CD14-positive monocyte (primary cell): ENCODE measurements at regions of chrX and their contacts with region 1.

Region 1: DNA sequence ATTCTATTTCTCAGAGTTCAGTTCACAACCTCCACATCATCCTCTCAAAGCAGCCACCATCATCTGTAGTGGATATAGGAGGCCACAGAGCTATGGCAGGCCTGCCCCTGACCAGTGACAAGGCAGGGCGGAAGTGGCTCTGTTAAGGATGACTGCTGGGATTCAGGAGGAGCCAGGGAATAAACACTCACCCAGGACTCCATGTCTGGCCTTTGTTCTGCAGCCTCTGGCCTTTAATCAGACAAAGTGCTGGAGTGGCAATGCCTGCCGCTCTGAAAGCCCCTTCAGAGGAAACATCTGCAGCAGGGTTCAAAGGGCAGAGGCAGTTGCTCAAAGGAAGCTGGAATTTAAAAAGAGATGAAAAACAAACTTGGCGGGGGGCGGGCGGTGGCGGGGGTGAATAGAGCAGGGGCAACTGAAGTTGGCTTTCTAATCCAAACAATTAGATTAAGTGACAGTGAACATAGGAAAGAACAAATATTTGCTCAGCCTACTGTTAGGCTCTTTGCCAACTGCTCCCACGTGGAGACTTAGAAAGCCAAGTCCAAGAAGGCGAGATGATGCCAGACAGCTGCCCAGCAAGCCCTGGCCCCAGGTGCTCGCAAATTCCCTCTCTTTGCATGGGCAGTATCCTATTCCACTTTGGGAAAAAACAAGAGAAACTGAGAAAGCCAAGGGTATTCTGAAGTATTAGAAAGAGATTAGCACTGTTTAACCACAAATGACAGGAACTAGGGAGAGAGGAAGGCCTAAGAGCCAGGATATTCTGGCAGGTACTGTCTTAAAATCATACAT is 5.5 kb downstream of the MPP1 start:
- DNase-seq: no peak
- H3K4me3 ChIP-seq: peak overlapping the region in 1 of 3 experiments; percentile 50
- H3K4me3 Mint-ChIP-seq: peak overlapping the region; percentile 55 to 56
- H3K27ac ChIP-seq: peak overlapping the region; percentile 94 to 100
- H3K27ac Mint-ChIP-seq: peak overlapping the region; percentile 96 to 98 (median 98)
- H3K4me1 ChIP-seq: peaks cover 87 to 94% of the 10 kb centered on the region in 2 donors
- H3K4me1 Mint-ChIP-seq: peaks cover 78% of the 10 kb centered on the region
- H3K27me3 ChIP-seq: no peaks in the 10 kb centered on the region
- H3K27me3 Mint-ChIP-seq: peaks cover 0 to 2% (median 0%) of the 10 kb centered on the region in 3 donors
- CTCF ChIP-seq: no peak

Region 2: DNA sequence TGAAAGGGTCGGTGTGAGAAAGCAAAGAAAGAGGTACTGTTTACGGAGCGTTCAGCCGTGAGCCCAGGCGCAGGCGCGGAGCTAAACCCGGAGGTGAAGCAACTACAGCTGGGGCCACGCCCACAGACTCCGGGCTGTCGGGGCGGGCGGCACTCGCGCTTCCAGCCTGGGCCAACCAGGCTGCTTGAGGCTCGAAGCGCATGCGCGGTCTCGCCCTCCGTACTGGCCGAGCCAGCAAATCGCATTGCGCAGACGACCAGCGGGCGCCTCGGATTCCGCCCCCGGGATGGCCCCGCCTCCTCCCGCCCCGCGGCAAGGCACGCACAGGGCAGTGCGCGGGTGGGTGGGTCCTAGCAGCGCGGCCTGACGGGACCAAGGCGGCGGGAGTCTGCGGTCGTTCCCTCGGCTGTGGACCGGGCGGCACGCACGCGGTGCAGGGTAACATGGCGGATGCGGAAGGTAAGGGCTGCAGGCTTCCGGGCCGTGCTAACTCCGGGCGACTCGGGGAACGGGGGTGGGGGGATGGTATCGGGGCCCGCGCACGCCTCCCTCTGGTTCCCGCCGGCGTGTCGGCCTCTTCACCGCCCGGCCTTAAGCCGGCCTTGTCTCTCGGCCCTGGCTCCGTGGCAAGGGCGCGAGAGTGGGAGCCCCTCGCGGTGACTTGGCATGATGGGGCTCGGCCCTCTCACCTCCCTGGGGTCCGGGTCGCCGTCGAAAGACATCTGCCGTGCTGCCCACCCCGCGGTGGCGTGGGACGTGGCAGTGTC is 37.0 kb before region 1 on chrX and contains the start of gene DKC1:
- intact Hi-C with region 1: loop called in 1 of 2 experiments (anchors 5 kb)
- DNase-seq: peak; percentile 95 to 96 (median 95)
- H3K4me3 ChIP-seq: peak within 1 kb of the TSS; percentile 57 to 71 (median 69)
- H3K4me3 Mint-ChIP-seq: peak within 1 kb of the TSS; percentile 84 to 90
- H3K27ac ChIP-seq: peak within 1 kb of the TSS; percentile 72 to 80
- H3K27ac Mint-ChIP-seq: peak within 1 kb of the TSS; percentile 69 to 89 (median 84)
- H3K4me1 ChIP-seq: peaks cover 8 to 14% of the 10 kb centered on the region in 2 donors
- H3K4me1 Mint-ChIP-seq: peaks cover 9% of the 10 kb centered on the region
- H3K27me3 ChIP-seq: no peaks in the 10 kb centered on the region
- H3K27me3 Mint-ChIP-seq: peaks cover 0 to 2% (median 0%) of the 10 kb centered on the region in 3 donors
- CTCF ChIP-seq: no peak
- polyA plus RNA-seq, gene DKC1: 14.1 to 21.6 (median 17.0) TPM